Activated CD4-positive, alpha-beta memory T cell treated with anti-CD3 and anti-CD28 coated beads, Interleukin-2, amount 10 ng/mL, durations not matched to agents 7 days and 5 days (primary cell): ENCODE measurements at regions of chr1 and their contacts with region 1.

Region 1: DNA sequence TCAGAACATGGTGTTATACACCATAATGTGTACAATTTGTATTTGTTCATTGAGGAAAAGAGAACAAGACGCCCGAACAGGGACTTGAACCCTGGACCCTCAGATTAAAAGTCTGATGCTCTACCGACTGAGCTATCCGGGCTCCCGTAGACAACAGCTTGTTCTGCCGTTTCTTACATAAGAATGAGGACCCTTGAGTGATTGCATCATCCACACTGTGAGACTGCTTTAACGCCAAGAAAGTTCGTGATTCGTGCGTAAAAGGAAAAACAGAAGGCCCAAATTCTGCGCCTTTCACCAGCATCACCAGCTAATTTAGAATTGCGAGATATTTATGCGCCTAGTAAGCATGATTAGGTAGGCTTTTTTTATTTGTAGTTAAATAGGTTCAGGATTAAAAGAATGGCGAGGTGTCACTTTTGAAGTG is 9.2 kb upstream of the MDM4 start:
- DNase-seq: peak; percentile 90
- H3K4me3 Mint-ChIP-seq: peak overlapping the region; percentile 84
- H3K27ac Mint-ChIP-seq: peak overlapping the region; percentile 98
- H3K4me1 Mint-ChIP-seq: peaks cover 39% of the 10 kb centered on the region
- H3K27me3 Mint-ChIP-seq: no peaks in the 10 kb centered on the region

Region 2: GRCh38 chr1:204398217-204399081 is 108.5 kb before region 1 on chr1:
- CTCF ChIA-PET with region 1: interaction called, 37 read pairs
- POLR2A ChIA-PET with region 1: no interaction called
- DNase-seq: peak; percentile 55
- H3K4me3 Mint-ChIP-seq: no peak overlapping the region
- H3K27ac Mint-ChIP-seq: peak overlapping the region; percentile 31
- H3K4me1 Mint-ChIP-seq: peaks cover 7% of the 10 kb centered on the region
- H3K27me3 Mint-ChIP-seq: no peaks in the 10 kb centered on the region

Region 3: GRCh38 chr1:204446370-204447111 is 60.4 kb before region 1 on chr1:
- CTCF ChIA-PET with region 1: interaction called, 519 read pairs
- POLR2A ChIA-PET with region 1: interaction called, 21 read pairs
- DNase-seq: peak; percentile 79
- H3K4me3 Mint-ChIP-seq: no peak overlapping the region
- H3K27ac Mint-ChIP-seq: peak overlapping the region; percentile 57
- H3K4me1 Mint-ChIP-seq: peaks cover 61% of the 10 kb centered on the region
- H3K27me3 Mint-ChIP-seq: no peaks in the 10 kb centered on the region

Region 4: DNA sequence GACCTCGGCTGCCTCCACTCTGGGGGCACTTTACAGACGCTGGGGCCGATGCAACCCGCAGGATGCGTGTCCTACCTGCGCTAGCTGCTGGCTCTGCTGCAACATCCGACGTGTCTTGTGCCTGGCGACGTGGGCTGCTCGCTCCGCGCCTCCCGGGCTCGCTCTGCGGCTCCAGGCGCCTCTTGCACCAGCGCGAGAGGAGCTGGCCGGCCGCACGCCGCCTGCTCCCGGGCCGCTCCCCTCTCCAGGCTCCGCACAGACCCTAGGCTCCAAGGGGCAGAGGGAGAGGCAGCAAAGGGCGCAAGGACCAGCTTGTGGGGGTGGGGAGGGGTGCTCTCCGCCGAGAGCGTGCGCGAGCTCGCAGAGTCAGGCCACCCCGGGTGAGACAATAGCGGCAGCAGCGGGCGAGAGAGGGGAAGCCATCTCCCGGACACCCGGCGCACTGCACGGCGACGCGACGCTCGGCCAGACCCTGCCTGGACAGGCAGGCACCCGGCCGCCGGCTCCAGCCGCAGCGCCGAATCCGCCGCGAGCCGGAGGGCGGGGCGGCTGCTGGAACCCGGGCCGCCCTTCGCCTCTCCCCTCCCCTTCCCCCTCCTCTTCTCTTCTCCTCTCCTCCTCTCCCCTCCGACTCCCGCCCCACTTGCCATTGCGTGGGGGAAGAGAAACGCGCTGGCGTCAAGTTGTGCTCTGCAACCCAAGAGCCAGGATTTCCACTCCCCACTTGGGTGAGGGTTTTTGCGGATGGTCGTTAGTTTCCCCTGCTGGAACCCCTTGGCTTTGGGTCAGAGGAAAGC is 12.5 kb before region 1 on chr1 and contains the start of gene PIK3C2B:
- CTCF ChIA-PET with region 1: interaction called, 40 read pairs
- POLR2A ChIA-PET with region 1: interaction called, 44 read pairs
- DNase-seq: peak; percentile 77
- H3K4me3 Mint-ChIP-seq: peak within 1 kb of the TSS; percentile 88
- H3K27ac Mint-ChIP-seq: peak within 1 kb of the TSS; percentile 84
- H3K4me1 Mint-ChIP-seq: peaks cover 58% of the 10 kb centered on the region
- H3K27me3 Mint-ChIP-seq: no peaks in the 10 kb centered on the region
- total RNA-seq, gene PIK3C2B: 31.0 to 32.0 TPM

Region 5: DNA sequence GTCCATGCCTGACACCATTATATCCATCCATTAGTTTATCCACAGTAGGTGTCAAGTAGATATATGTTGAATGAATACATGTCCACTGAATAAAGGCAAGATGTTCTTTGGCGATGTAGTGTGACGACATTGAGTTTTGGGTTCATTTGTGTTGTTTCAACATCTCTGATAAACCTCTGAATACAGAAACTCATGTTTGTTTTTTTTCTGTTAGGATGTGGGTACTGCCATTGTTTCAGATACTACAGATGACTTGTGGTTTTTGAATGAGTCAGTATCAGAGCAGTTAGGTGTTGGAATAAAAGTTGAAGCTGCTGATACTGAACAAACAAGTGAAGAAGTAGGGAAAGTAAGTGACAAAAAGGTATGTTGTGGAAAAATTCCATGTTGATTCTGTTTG is 37.3 kb after region 1 on chr1:
- CTCF ChIA-PET with region 1: interaction called, 8 read pairs
- POLR2A ChIA-PET with region 1: interaction called, 11 read pairs
- DNase-seq: no peak
- H3K4me3 Mint-ChIP-seq: peak overlapping the region; percentile 33
- H3K27ac Mint-ChIP-seq: peak overlapping the region; percentile 86
- H3K4me1 Mint-ChIP-seq: peaks cover 54% of the 10 kb centered on the region
- H3K27me3 Mint-ChIP-seq: no peaks in the 10 kb centered on the region

Region 6: GRCh38 chr1:204578867-204579664 is 72.1 kb after region 1 on chr1:
- CTCF ChIA-PET with region 1: no interaction called
- POLR2A ChIA-PET with region 1: interaction called, 12 read pairs
- DNase-seq: peak; percentile 55
- H3K4me3 Mint-ChIP-seq: peak overlapping the region; percentile 74
- H3K27ac Mint-ChIP-seq: peak overlapping the region; percentile 88
- H3K4me1 Mint-ChIP-seq: peaks cover 27% of the 10 kb centered on the region
- H3K27me3 Mint-ChIP-seq: no peaks in the 10 kb centered on the region